ENCODE measurements at regions of chr15 and their contacts with region 1.

Region 1: GRCh38 chr15:34013746-34014145 is 25.3 kb downstream of the AVEN start:
- DNase-seq: no peak
- ATAC-seq: no peak
- H3K4me3 ChIP-seq: no peak overlapping the region
- H3K27ac ChIP-seq: no peak overlapping the region
- H3K4me1 ChIP-seq: no peaks in the 10 kb centered on the region
- H3K27me3 ChIP-seq: no peaks in the 10 kb centered on the region
- CTCF ChIP-seq: no peak

Region 2: GRCh38 chr15:33756961-33757360 is 256.8 kb before region 1 on chr15:
- CTCF ChIA-PET with region 1: interaction called, 10 read pairs
- POLR2A ChIA-PET with region 1: no interaction called
- intact Hi-C with region 1: no loop called
- DNase-seq: no peak
- ATAC-seq: no peak
- H3K4me3 ChIP-seq: no peak overlapping the region
- H3K27ac ChIP-seq: no peak overlapping the region
- H3K4me1 ChIP-seq: no peaks in the 10 kb centered on the region
- H3K27me3 ChIP-seq: peaks cover 45% of the 10 kb centered on the region
- CTCF ChIP-seq: no peak

Measured in PC-3 (cell line).